ENCODE measurements at regions of chr1 and their contacts with region 1.

Region 1: GRCh38 chr1:54406339-54407153 is at the start of gene SSBP3:
- DNase-seq: peak; percentile 93
- ATAC-seq: peak; percentile 89
- H3K4me3 ChIP-seq: peak within 1 kb of the TSS; percentile 60 to 94 (median 85)
- H3K4me3 Mint-ChIP-seq: peak within 1 kb of the TSS; percentile 94
- H3K27ac ChIP-seq: peak within 1 kb of the TSS; percentile 53 to 70
- H3K27ac Mint-ChIP-seq: peak within 1 kb of the TSS; percentile 87
- H3K4me1 ChIP-seq: peaks cover 40 to 47% of the 10 kb centered on the region in 2 donors
- H3K4me1 Mint-ChIP-seq: peaks cover 46% of the 10 kb centered on the region
- H3K27me3 ChIP-seq: peaks cover 0 to 5% (median 0%) of the 10 kb centered on the region in 4 experiments
- H3K27me3 Mint-ChIP-seq: no peaks in the 10 kb centered on the region
- CTCF ChIP-seq: no peak
- total RNA-seq, gene SSBP3: 30.7 and 32.4 TPM in 2 replicates

Region 2: DNA sequence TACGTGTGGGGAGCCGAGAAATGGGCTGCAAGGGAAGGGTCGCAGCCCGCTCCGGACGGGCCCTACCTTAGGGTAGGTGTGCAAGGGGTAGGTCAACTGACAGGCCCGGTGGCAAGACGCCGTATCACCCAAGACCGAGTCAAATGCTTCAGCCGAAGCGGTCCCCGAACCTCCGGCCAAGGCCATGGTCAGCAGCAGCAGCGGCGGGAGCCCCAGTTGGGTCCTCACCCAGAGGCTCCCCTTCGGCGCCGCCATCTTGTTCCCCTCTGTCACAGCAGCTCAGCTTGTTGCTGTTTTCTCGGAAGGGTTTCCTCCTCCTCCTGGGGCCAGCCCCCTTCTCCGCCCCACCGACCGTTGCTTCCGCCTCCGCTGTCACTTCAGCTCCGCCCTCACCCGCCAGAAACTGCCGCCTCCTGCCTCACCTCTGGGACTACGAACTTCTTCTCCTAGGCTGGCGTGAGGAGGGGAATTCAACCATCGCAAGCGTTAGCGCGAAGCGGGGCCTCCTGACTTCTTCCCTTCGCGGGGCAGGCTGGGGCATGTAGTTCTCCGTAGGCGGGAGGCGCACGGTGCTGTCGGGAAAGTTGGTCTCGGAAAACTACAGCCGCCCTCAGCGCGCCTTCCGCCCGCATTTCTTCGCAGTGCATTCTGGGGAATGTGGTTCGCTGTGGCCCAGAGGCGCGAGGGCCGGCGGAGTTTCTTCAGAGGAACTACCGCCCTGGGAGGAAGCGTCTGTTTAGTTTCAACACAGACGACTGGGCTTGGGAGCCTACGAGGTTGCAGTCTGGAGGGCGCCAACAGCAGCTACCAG is 353.4 kb before region 1 on chr1 and contains the starts of genes TCEANC2 and TMEM59:
- CTCF ChIA-PET with region 1: interaction called, 3 read pairs
- POLR2A ChIA-PET with region 1: no interaction called
- intact Hi-C with region 1: loop called (anchors 1 kb)
- DNase-seq: peak; percentile 99
- ATAC-seq: peak; percentile 91
- H3K4me3 ChIP-seq: peak within 1 kb of the TSS; percentile 65 to 99 (median 93)
- H3K4me3 Mint-ChIP-seq: no peak within 1 kb of the TSS
- H3K27ac ChIP-seq: peak within 1 kb of the TSS; percentile 75 to 94
- H3K27ac Mint-ChIP-seq: peak within 1 kb of the TSS; percentile 60
- H3K4me1 ChIP-seq: peaks cover 36% of the 10 kb centered on the region in 2 donors
- H3K4me1 Mint-ChIP-seq: peaks cover 36% of the 10 kb centered on the region
- H3K27me3 ChIP-seq: no peaks in the 10 kb centered on the region
- H3K27me3 Mint-ChIP-seq: no peaks in the 10 kb centered on the region
- CTCF ChIP-seq: no peak
- total RNA-seq, gene TCEANC2: 13.5 and 15.9 TPM in 2 replicates
- total RNA-seq, gene TMEM59: 146 and 152 TPM in 2 replicates

Region 3: GRCh38 chr1:54199765-54200518 is 206.6 kb before region 1 on chr1 and contains the starts of genes CYB5RL and MRPL37:
- CTCF ChIA-PET with region 1: interaction called, 3 read pairs
- POLR2A ChIA-PET with region 1: interaction called, 3 read pairs
- intact Hi-C with region 1: loop called (anchors 1 kb)
- DNase-seq: peak; percentile 94
- ATAC-seq: peak; percentile 99
- H3K4me3 ChIP-seq: peak within 1 kb of the TSS; percentile 75 to 98 (median 88)
- H3K4me3 Mint-ChIP-seq: peak within 1 kb of the TSS; percentile 97
- H3K27ac ChIP-seq: peak within 1 kb of the TSS; percentile 60 to 77
- H3K27ac Mint-ChIP-seq: peak within 1 kb of the TSS; percentile 88
- H3K4me1 ChIP-seq: peaks cover 18 to 21% of the 10 kb centered on the region in 2 donors
- H3K4me1 Mint-ChIP-seq: peaks cover 34% of the 10 kb centered on the region
- H3K27me3 ChIP-seq: no peaks in the 10 kb centered on the region
- H3K27me3 Mint-ChIP-seq: no peaks in the 10 kb centered on the region
- CTCF ChIP-seq: no peak
- total RNA-seq, gene CYB5RL: 12.4 and 13.2 TPM in 2 replicates
- total RNA-seq, gene MRPL37: 37.0 and 39.9 TPM in 2 replicates

Region 4: DNA sequence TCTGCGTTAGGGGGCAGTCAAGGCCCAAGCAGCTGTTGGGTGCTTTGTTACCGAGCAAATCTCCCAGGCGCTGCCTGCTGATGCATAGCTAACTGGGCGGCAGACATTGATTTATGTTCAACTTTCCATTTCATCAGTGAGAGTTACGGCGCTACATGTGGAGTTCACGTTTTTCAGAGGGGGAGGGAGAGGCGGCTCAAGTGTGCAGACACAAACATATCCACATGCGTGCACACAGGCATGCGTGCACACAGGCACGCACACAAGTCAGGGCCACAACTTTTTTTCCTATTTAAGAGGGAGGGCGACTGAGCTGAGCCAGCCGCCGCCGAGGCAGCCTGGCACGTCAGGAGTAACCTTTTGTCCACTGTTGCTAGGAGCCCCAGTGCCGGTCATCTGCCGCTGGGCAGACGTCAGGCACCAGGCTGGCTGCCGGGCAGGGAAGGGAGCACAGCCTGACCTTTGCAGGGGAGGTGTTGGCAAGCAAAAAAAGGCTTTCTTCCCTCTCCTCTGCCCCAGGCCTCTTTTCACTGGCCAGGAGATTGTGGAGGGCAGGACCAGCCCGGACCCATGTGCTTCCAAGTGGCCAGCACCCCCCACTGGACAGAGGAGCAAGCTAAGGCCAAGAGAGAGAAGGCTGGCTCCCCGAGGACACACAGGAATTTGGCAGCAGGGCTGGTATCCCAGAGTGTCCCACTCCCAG is 133.3 kb before region 1 on chr1:
- CTCF ChIA-PET with region 1: no interaction called
- POLR2A ChIA-PET with region 1: no interaction called
- intact Hi-C with region 1: no loop called
- DNase-seq: no peak
- ATAC-seq: peak; percentile 41
- H3K4me3 ChIP-seq: no peak overlapping the region
- H3K4me3 Mint-ChIP-seq: no peak overlapping the region
- H3K27ac ChIP-seq: no peak overlapping the region
- H3K27ac Mint-ChIP-seq: no peak overlapping the region
- H3K4me1 ChIP-seq: no peaks in the 10 kb centered on the region
- H3K4me1 Mint-ChIP-seq: no peaks in the 10 kb centered on the region
- H3K27me3 ChIP-seq: no peaks in the 10 kb centered on the region
- H3K27me3 Mint-ChIP-seq: no peaks in the 10 kb centered on the region
- CTCF ChIP-seq: no peak

Region 5: GRCh38 chr1:54287176-54287650 is 119.3 kb before region 1 on chr1:
- CTCF ChIA-PET with region 1: no interaction called
- POLR2A ChIA-PET with region 1: no interaction called
- intact Hi-C with region 1: no loop called
- DNase-seq: no peak
- ATAC-seq: no peak
- H3K4me3 ChIP-seq: no peak overlapping the region
- H3K4me3 Mint-ChIP-seq: no peak overlapping the region
- H3K27ac ChIP-seq: no peak overlapping the region
- H3K27ac Mint-ChIP-seq: no peak overlapping the region
- H3K4me1 ChIP-seq: peaks cover 0 to 11% of the 10 kb centered on the region in 2 donors
- H3K4me1 Mint-ChIP-seq: peaks cover 15% of the 10 kb centered on the region
- H3K27me3 ChIP-seq: no peaks in the 10 kb centered on the region
- H3K27me3 Mint-ChIP-seq: no peaks in the 10 kb centered on the region
- CTCF ChIP-seq: no peak

Region 6: GRCh38 chr1:54355931-54356679 is 50.4 kb before region 1 on chr1:
- CTCF ChIA-PET with region 1: interaction called, 10 read pairs
- POLR2A ChIA-PET with region 1: no interaction called
- intact Hi-C with region 1: no loop called
- DNase-seq: peak; percentile 51
- ATAC-seq: peak; percentile 51
- H3K4me3 ChIP-seq: peak overlapping the region; percentile 21 to 52 (median 46)
- H3K4me3 Mint-ChIP-seq: peak overlapping the region; percentile 82
- H3K27ac ChIP-seq: no peak overlapping the region
- H3K27ac Mint-ChIP-seq: no peak overlapping the region
- H3K4me1 ChIP-seq: peaks cover 12 to 19% of the 10 kb centered on the region in 2 donors
- H3K4me1 Mint-ChIP-seq: peaks cover 19% of the 10 kb centered on the region
- H3K27me3 ChIP-seq: no peaks in the 10 kb centered on the region
- H3K27me3 Mint-ChIP-seq: no peaks in the 10 kb centered on the region
- CTCF ChIP-seq: no peak

Region 7: GRCh38 chr1:54715493-54716298 is 309.1 kb after region 1 on chr1 and contains the start of gene TTC4:
- CTCF ChIA-PET with region 1: no interaction called
- POLR2A ChIA-PET with region 1: no interaction called
- intact Hi-C with region 1: loop called (anchors 2 kb)
- DNase-seq: peak; percentile 91
- ATAC-seq: peak; percentile 99
- H3K4me3 ChIP-seq: peak within 1 kb of the TSS; percentile 81 to 92 (median 91)
- H3K4me3 Mint-ChIP-seq: peak within 1 kb of the TSS; percentile 87
- H3K27ac ChIP-seq: peak within 1 kb of the TSS; percentile 50 to 71
- H3K27ac Mint-ChIP-seq: peak within 1 kb of the TSS; percentile 83
- H3K4me1 ChIP-seq: peaks cover 16 to 17% of the 10 kb centered on the region in 2 donors
- H3K4me1 Mint-ChIP-seq: peaks cover 26% of the 10 kb centered on the region
- H3K27me3 ChIP-seq: no peaks in the 10 kb centered on the region
- H3K27me3 Mint-ChIP-seq: no peaks in the 10 kb centered on the region
- CTCF ChIP-seq: no peak
- total RNA-seq, gene TTC4: 19.9 and 23.9 TPM in 2 replicates

Region 8: DNA sequence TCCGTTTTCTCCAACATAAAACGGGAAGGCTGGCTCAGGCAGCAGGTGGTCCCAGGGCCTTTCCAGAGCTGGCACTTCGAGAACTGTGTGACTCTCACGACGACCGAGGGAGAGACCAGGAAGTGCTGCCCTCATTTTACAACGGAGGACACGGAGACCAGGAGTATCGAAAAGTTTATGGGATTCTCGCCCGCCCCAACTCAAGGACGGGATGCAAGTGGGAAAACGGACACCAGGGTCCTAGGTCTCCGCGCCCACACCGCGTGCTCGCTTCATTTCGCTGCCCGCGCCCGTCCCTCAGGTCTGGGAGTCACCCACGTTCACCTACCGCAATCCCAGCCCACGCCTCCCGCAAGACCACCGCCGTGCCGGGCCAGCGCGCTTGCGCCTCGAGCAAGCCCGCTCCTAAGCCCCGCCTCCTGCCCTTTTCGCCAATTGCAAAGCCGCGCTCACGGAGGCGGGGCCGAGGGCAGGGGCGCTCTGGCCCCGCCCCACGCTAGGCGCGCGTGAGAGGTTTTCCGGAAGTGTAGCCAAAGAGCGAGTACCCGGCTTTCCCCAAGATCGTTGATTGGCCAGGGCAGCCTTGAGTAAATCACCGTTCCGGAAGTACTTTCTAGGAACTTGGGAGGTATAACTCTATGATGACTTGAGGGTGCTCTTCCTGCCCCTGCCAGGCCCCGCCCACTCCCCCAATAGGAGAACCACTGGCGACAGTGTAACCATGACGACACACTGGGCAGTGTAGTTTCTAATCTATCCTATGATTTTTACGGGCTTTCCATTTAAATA is 357.8 kb after region 1 on chr1 and contains the start of gene PARS2:
- CTCF ChIA-PET with region 1: no interaction called
- POLR2A ChIA-PET with region 1: no interaction called
- intact Hi-C with region 1: loop called (anchors 2 kb)
- DNase-seq: peak; percentile 99
- ATAC-seq: peak; percentile 92
- H3K4me3 ChIP-seq: peak within 1 kb of the TSS; percentile 75 to 96 (median 91)
- H3K4me3 Mint-ChIP-seq: peak within 1 kb of the TSS; percentile 96
- H3K27ac ChIP-seq: peak within 1 kb of the TSS; percentile 47 to 81
- H3K27ac Mint-ChIP-seq: peak within 1 kb of the TSS; percentile 92
- H3K4me1 ChIP-seq: peaks cover 8 to 10% of the 10 kb centered on the region in 2 donors
- H3K4me1 Mint-ChIP-seq: peaks cover 20% of the 10 kb centered on the region
- H3K27me3 ChIP-seq: no peaks in the 10 kb centered on the region
- H3K27me3 Mint-ChIP-seq: no peaks in the 10 kb centered on the region
- CTCF ChIP-seq: no peak
- total RNA-seq, gene PARS2: 4.5 and 4.9 TPM in 2 replicates

Region 9: DNA sequence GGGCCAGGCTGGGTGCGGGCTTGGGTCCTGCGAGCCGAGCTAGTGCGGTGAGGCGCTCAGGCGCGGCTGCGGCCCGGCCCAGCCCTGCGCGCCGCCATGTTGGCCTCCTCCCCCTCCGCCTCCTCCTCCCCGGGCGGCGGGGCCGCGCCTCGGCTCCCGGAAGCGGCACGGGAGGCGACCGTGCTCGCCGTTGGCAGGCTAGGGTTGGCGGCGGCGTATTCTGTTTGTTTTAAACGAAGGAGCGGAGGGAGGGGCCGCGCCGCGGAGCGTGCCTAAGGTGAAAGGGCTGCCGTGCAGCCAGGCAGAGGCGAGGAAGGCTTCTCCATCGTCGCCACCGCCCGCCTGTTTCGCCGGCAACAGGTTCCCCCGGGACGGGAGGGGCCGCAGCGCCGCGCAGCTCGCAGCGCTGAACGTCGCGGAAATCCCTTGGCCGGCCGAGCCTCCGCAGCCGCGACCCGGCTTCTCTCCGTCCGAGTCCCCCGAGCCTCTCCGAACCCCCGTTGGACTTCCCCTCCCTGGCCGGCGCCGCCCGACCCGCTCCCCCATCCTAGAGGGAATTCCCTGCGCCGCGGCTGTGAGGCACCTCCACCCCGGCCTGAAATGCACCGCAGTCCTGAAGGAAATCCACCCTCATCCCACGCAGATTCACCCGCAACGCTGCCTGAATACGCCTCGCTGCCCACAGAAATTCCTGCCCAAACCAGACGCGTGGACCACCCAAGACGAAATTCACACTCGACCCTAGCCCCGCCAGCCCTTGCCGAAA is 808.9 kb after region 1 on chr1 and contains the start of gene USP24:
- CTCF ChIA-PET with region 1: no interaction called
- POLR2A ChIA-PET with region 1: no interaction called
- intact Hi-C with region 1: loop called (anchors 10 kb)
- DNase-seq: peak; percentile 90
- ATAC-seq: peak; percentile 74
- H3K4me3 ChIP-seq: peak within 1 kb of the TSS; percentile 72 to 83 (median 79)
- H3K4me3 Mint-ChIP-seq: peak within 1 kb of the TSS; percentile 98
- H3K27ac ChIP-seq: peak within 1 kb of the TSS; percentile 95 to 97
- H3K27ac Mint-ChIP-seq: peak within 1 kb of the TSS; percentile 99
- H3K4me1 ChIP-seq: peaks cover 54 to 59% of the 10 kb centered on the region in 2 donors
- H3K4me1 Mint-ChIP-seq: peaks cover 64% of the 10 kb centered on the region
- H3K27me3 ChIP-seq: no peaks in the 10 kb centered on the region
- H3K27me3 Mint-ChIP-seq: no peaks in the 10 kb centered on the region
- CTCF ChIP-seq: no peak
- total RNA-seq, gene USP24: 152 and 183 TPM in 2 replicates

Region 10: GRCh38 chr1:55898181-55898580 is 1491.6 kb after region 1 on chr1:
- CTCF ChIA-PET with region 1: no interaction called
- POLR2A ChIA-PET with region 1: no interaction called
- intact Hi-C with region 1: no loop called
- DNase-seq: no peak
- ATAC-seq: no peak
- H3K4me3 ChIP-seq: no peak overlapping the region
- H3K4me3 Mint-ChIP-seq: no peak overlapping the region
- H3K27ac ChIP-seq: no peak overlapping the region
- H3K27ac Mint-ChIP-seq: no peak overlapping the region
- H3K4me1 ChIP-seq: no peaks in the 10 kb centered on the region
- H3K4me1 Mint-ChIP-seq: no peaks in the 10 kb centered on the region
- H3K27me3 ChIP-seq: no peaks in the 10 kb centered on the region
- H3K27me3 Mint-ChIP-seq: peaks cover 3% of the 10 kb centered on the region
- CTCF ChIP-seq: no peak